ENCODE measurements at regions of chr18 and their contacts with region 1.

Region 1: GRCh38 chr18:24051031-24051947 is 36.7 kb downstream of the TTC39C start:
- DNase-seq: no peak
- H3K4me3 Mint-ChIP-seq: peak overlapping the region; percentile 5
- H3K27ac Mint-ChIP-seq: peak overlapping the region; percentile 72
- H3K4me1 Mint-ChIP-seq: peaks cover 75% of the 10 kb centered on the region
- H3K27me3 Mint-ChIP-seq: no peaks in the 10 kb centered on the region

Region 2: GRCh38 chr18:23828426-23828825 is 222.9 kb before region 1 on chr18:
- CTCF ChIA-PET with region 1: no interaction called
- intact Hi-C with region 1: loop called (anchors 5 kb)
- DNase-seq: peak; percentile 61
- H3K4me3 Mint-ChIP-seq: no peak overlapping the region
- H3K27ac Mint-ChIP-seq: no peak overlapping the region
- H3K4me1 Mint-ChIP-seq: peaks cover 37% of the 10 kb centered on the region
- H3K27me3 Mint-ChIP-seq: no peaks in the 10 kb centered on the region

Region 3: DNA sequence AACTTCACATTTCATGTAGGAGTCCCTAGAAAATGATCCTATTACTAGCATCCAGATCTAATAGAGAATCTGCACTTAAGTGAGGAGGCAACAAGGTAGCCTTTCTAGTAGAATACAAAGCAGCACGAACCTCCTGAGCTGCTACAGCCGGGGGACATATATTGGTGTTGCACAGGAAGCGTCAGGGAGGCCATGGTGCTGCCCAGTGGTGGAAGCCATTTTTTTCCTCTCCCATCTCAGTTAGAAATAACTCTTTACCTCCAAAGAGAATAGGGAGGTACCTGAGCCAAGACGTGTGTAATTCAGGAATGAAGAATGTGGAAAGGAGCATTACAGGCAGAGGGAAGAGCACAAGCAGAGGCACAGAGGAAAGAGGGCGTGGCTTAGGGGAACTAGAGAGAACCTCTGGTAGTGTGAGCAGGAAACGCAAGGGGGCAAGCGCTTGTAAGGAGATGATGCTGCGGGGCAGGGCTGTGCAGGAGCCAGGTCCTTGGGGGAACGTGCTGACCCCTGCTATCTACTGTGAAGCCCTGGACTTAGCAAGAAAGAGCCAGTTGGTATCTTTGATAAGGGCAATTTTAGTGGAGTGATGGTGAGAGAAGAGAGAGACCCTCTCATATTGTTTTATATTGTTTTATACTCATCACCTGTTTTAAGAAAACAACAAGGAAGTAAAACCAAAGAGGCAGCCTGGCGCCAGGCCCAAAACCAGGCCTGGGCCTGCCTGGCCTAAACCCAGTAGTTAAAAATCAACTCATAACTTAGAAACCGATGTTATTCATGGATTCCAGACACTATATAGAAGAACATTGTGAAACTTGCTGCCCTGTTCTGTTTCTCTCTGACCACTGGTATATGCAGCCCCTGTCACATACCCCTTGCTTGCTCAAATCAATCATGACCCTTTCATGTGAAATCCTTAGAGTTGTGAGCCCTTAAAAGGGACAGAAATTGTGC is 86.7 kb before region 1 on chr18:
- CTCF ChIA-PET with region 1: no interaction called
- intact Hi-C with region 1: loop called (anchors 2 kb)
- DNase-seq: peak; percentile 75
- H3K4me3 Mint-ChIP-seq: peak overlapping the region; percentile 43
- H3K27ac Mint-ChIP-seq: peak overlapping the region; percentile 81
- H3K4me1 Mint-ChIP-seq: peaks cover 45% of the 10 kb centered on the region
- H3K27me3 Mint-ChIP-seq: no peaks in the 10 kb centered on the region

Region 4: GRCh38 chr18:24019641-24020331 is 31.5 kb before region 1 on chr18:
- CTCF ChIA-PET with region 1: interaction called, 4 read pairs
- intact Hi-C with region 1: loop called (anchors 1 kb)
- DNase-seq: peak; percentile 81
- H3K4me3 Mint-ChIP-seq: peak overlapping the region; percentile 64
- H3K27ac Mint-ChIP-seq: peak overlapping the region; percentile 94
- H3K4me1 Mint-ChIP-seq: peaks cover 83% of the 10 kb centered on the region
- H3K27me3 Mint-ChIP-seq: no peaks in the 10 kb centered on the region

Region 5: GRCh38 chr18:24063121-24063731 is 11.9 kb after region 1 on chr18:
- CTCF ChIA-PET with region 1: no interaction called
- intact Hi-C with region 1: loop called (anchors 1 kb)
- DNase-seq: peak; percentile 47
- H3K4me3 Mint-ChIP-seq: no peak overlapping the region
- H3K27ac Mint-ChIP-seq: peak overlapping the region; percentile 7
- H3K4me1 Mint-ChIP-seq: peaks cover 53% of the 10 kb centered on the region
- H3K27me3 Mint-ChIP-seq: no peaks in the 10 kb centered on the region

Region 6: DNA sequence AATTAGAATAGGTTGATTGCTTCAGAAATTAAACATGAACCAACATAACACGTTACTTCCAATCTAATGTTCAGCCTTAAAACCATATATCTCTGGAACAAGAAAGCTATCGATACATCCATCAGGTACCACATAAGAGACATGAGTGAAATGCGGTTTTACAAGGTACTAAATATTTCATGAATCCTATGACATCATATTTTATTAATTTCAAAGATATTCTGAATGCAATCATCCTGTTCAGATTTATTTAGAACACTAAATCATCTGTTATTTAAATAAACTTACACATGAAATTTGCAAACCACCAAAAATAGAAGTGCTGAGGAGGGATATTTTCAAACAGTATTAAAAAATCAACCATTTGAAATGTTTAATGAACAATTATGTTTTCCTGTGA is 227.3 kb after region 1 on chr18:
- CTCF ChIA-PET with region 1: no interaction called
- intact Hi-C with region 1: no loop called
- DNase-seq: no peak
- H3K4me3 Mint-ChIP-seq: no peak overlapping the region
- H3K27ac Mint-ChIP-seq: no peak overlapping the region
- H3K4me1 Mint-ChIP-seq: no peaks in the 10 kb centered on the region
- H3K27me3 Mint-ChIP-seq: peaks cover 11% of the 10 kb centered on the region

Measured in activated naive CD4-positive, alpha-beta T cell treated with anti-CD3 and anti-CD28 coated beads for 36 hours (primary cell).